Breast epithelium (tissue), 4 donors: ENCODE measurements at regions of chr2 and their contacts with region 1.

Region 1: GRCh38 chr2:173990970-173991819 is 26.0 kb upstream of the SP3 start:
- DNase-seq: peak; percentile 61 to 66
- H3K4me3 ChIP-seq: peak overlapping the region in 1 of 3 donors; percentile 32
- H3K27ac ChIP-seq: peak overlapping the region; percentile 66 to 86
- H3K4me1 ChIP-seq: peaks cover 8 to 22% of the 10 kb centered on the region in 2 donors
- H3K27me3 ChIP-seq: no peaks in the 10 kb centered on the region
- CTCF ChIP-seq: no peak
- POLR2A ChIP-seq: no peak

Region 2: GRCh38 chr2:173696274-173696673 is 294.9 kb before region 1 on chr2:
- intact Hi-C with region 1: no loop called
- DNase-seq: no peak
- H3K4me3 ChIP-seq: no peak overlapping the region
- H3K27ac ChIP-seq: no peak overlapping the region
- H3K4me1 ChIP-seq: no peaks in the 10 kb centered on the region
- H3K27me3 ChIP-seq: no peaks in the 10 kb centered on the region
- CTCF ChIP-seq: no peak
- POLR2A ChIP-seq: no peak

Region 3: DNA sequence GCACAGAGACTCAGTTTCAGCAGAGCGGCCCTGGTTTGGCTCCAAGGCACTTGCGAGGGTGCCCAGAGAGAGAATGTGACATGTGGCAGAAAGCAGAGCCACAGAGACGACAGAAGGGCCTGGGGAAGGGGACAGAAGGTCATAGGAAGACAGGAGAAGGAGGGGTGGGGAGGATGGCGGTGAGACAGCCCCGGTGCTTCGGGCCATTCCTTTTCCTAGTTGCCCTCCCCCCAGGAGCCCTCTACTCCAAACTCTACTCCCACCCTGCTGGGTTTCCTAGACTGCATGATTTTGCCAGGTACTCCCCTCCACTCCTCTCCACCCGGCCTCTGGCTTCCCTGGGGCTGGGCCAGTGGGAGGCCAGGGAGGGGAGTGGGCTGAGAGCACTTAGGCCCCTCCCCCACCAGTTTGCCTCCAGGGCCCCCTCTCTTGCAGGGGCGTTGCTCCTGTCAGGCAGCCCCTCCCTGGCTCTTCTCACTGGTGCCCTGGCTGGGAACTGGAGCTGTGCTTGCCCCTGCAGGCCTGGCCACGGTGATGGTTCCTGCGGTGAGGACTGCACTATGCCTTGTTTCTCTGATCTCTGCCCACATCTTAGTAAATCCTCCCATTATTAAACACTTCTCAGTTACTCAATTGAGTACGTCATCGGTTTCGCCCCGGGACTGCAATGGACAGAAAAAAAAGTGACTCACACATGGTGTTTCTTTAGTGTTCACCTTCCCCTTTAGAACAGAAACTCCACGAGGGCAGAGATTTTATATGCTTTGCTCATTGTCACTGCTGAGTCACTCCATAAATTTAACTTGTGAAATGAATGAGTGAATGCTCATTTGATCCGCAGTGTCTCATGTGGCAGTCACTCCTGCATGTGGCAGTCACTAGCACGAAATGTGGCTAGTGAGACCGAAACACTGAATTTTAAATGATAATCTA is 32.7 kb after region 1 on chr2:
- intact Hi-C with region 1: loop called (anchors 1 kb)
- DNase-seq: peak in 1 of 2 donors; percentile 89
- H3K4me3 ChIP-seq: peak overlapping the region in 2 of 3 donors; percentile 14 to 47
- H3K27ac ChIP-seq: peak overlapping the region; percentile 87 to 99
- H3K4me1 ChIP-seq: peaks cover 0 to 24% of the 10 kb centered on the region in 2 donors
- H3K27me3 ChIP-seq: no peaks in the 10 kb centered on the region
- CTCF ChIP-seq: no peak
- POLR2A ChIP-seq: peak; percentile 41

Region 4: DNA sequence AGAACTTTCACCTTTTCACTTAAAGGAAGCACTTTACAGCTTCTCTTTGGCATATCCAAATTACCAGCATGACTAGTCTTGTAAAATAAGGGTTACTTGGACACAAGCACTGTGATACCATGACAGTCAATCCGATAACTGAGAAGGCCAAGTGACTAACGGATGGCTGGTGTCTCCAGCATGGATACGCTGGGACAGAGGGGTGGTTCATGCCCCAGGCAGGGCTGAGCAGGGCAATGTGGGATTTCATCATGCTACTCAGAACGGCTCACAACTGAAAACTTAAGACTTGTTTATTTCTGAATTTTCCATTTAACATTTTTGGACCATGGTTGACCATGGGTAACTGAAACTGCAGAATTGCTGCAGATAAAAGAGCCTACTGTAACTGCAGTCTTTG is 538.7 kb after region 1 on chr2:
- intact Hi-C with region 1: loop called (anchors 5 kb)
- DNase-seq: no peak
- H3K4me3 ChIP-seq: no peak overlapping the region
- H3K27ac ChIP-seq: no peak overlapping the region
- H3K4me1 ChIP-seq: no peaks in the 10 kb centered on the region
- H3K27me3 ChIP-seq: no peaks in the 10 kb centered on the region
- CTCF ChIP-seq: no peak
- POLR2A ChIP-seq: no peak